ENCODE measurements at regions of chr3 and their contacts with region 1.

Region 1: DNA sequence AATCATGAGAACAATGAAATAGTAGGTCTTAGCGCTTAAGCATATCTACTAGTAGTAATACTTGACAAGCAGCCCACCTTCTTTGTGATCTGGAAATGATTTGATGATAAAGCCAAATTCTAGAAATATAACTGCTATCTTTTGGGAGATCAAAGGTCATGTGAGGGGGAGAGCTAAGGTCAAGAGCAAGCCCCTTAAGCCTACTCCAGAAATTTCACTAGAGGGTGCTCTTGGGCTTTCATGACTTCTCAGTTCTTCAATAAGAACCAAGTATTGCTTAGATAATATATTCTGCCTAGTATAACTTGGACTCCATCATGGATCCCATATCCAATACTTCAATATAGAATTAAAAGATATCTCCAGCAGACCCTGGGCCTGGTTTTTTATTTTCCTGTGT is 319.6 kb downstream of the ZBTB20 start:
- DNase-seq: no peak
- ATAC-seq: peak; percentile 75
- H3K4me3 Mint-ChIP-seq: no peak overlapping the region
- H3K27ac Mint-ChIP-seq: no peak overlapping the region
- H3K4me1 Mint-ChIP-seq: no peaks in the 10 kb centered on the region
- H3K27me3 Mint-ChIP-seq: no peaks in the 10 kb centered on the region
- CTCF ChIP-seq: no peak

Region 2: GRCh38 chr3:114775395-114775794 is 52.1 kb before region 1 on chr3:
- CTCF ChIA-PET with region 1: no interaction called
- POLR2A ChIA-PET with region 1: no interaction called
- intact Hi-C with region 1: no loop called
- DNase-seq: no peak
- ATAC-seq: no peak
- H3K4me3 Mint-ChIP-seq: no peak overlapping the region
- H3K27ac Mint-ChIP-seq: no peak overlapping the region
- H3K4me1 Mint-ChIP-seq: no peaks in the 10 kb centered on the region
- H3K27me3 Mint-ChIP-seq: no peaks in the 10 kb centered on the region
- CTCF ChIP-seq: no peak

Region 3: GRCh38 chr3:114789803-114790202 is 37.7 kb before region 1 on chr3:
- CTCF ChIA-PET with region 1: no interaction called
- POLR2A ChIA-PET with region 1: no interaction called
- intact Hi-C with region 1: no loop called
- DNase-seq: no peak
- ATAC-seq: no peak
- H3K4me3 Mint-ChIP-seq: no peak overlapping the region
- H3K27ac Mint-ChIP-seq: no peak overlapping the region
- H3K4me1 Mint-ChIP-seq: no peaks in the 10 kb centered on the region
- H3K27me3 Mint-ChIP-seq: no peaks in the 10 kb centered on the region
- CTCF ChIP-seq: no peak

Region 4: DNA sequence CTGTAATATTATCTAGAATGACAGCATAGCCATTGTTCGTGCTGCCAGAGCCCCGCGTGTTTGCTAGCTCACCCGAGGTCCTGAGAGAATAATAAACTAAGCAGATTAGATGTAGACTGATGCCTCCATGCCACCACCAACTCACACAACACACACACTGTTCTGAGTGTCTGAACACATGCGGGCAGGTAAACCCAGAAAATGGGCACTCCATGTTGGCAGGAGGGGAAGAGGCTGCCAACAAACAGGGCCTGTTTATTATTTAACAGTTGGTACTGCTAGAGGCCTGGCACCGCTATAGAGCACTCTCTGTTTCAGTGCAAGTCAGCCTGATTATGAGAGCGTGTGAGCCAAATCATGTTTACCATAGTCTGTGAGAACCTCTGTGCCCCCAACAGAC is 20.6 kb after region 1 on chr3:
- CTCF ChIA-PET with region 1: no interaction called
- POLR2A ChIA-PET with region 1: no interaction called
- intact Hi-C with region 1: loop called (anchors 2 kb)
- DNase-seq: no peak
- ATAC-seq: no peak
- H3K4me3 Mint-ChIP-seq: no peak overlapping the region
- H3K27ac Mint-ChIP-seq: no peak overlapping the region
- H3K4me1 Mint-ChIP-seq: no peaks in the 10 kb centered on the region
- H3K27me3 Mint-ChIP-seq: no peaks in the 10 kb centered on the region
- CTCF ChIP-seq: no peak

Region 5: DNA sequence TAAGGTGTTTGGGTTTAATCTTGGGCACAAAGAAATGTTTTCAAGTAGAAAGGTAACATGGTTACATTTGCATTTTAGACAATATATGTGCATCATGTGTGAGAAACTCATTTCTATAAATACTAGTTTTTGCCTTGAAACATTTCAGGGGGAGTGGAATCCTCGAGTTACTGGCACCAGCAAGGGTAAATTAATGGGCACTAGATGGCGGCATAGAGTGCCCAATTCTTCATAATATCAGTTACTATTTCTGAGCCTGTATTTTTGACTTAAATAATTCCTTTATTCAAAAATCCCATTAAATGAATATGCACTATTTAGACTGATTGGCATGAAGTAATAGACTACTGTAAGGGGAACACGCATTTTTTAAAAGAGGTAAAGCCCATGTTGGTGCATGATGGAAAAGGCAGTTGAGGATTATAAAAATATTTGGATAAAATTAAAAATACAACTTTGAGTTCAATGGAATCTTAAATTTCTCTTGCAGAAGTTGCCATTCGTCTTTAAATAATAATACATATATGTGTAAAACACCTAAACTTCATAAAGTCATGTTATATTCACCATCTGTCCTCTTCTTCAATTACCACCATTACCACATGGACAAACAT is 213.3 kb after region 1 on chr3:
- CTCF ChIA-PET with region 1: no interaction called
- POLR2A ChIA-PET with region 1: no interaction called
- intact Hi-C with region 1: loop called (anchors 5 kb)
- DNase-seq: no peak
- ATAC-seq: no peak
- H3K4me3 Mint-ChIP-seq: no peak overlapping the region
- H3K27ac Mint-ChIP-seq: no peak overlapping the region
- H3K4me1 Mint-ChIP-seq: no peaks in the 10 kb centered on the region
- H3K27me3 Mint-ChIP-seq: no peaks in the 10 kb centered on the region
- CTCF ChIP-seq: peak; percentile 24

Region 6: DNA sequence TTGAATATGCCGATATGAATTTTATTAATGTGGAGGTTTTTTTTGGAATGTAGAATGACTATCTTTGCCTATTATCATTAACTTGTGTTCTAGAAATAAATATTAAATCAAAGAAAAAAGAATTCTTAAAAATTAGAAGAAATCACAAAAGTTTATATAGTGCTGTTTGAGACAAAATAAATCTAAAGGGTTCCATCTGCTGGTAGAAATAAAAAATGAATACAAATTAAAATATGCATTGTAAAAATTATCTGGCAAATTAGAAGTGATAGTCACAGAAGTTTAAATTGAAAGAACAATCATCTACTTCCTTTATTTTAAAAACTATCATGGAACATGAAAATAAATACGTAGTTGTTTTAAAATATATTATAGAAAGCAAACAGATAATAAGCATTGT is 342.3 kb after region 1 on chr3:
- CTCF ChIA-PET with region 1: interaction called, 4 read pairs
- POLR2A ChIA-PET with region 1: no interaction called
- intact Hi-C with region 1: loop called (anchors 1 kb)
- DNase-seq: no peak
- ATAC-seq: no peak
- H3K4me3 Mint-ChIP-seq: no peak overlapping the region
- H3K27ac Mint-ChIP-seq: no peak overlapping the region
- H3K4me1 Mint-ChIP-seq: peaks cover 7% of the 10 kb centered on the region
- H3K27me3 Mint-ChIP-seq: no peaks in the 10 kb centered on the region
- CTCF ChIP-seq: no peak

Region 7: GRCh38 chr3:115814778-115815380 is 987.4 kb after region 1 on chr3:
- CTCF ChIA-PET with region 1: no interaction called
- POLR2A ChIA-PET with region 1: no interaction called
- intact Hi-C with region 1: loop called (anchors 1 kb)
- DNase-seq: peak; percentile 44
- ATAC-seq: peak; percentile 70
- H3K4me3 Mint-ChIP-seq: no peak overlapping the region
- H3K27ac Mint-ChIP-seq: no peak overlapping the region
- H3K4me1 Mint-ChIP-seq: no peaks in the 10 kb centered on the region
- H3K27me3 Mint-ChIP-seq: peaks cover 5% of the 10 kb centered on the region
- CTCF ChIP-seq: no peak

Measured in activated B cell treated with CpG ODN at 0.5 μM for 24 hours (primary cell).